GM12878 (cell line): ENCODE measurements at regions of chr10 and their contacts with region 1.

Region 1: GRCh38 chr10:77710759-77711682 is 73.4 kb upstream of the KCNMA1 start:
- DNase-seq: no peak
- ATAC-seq: peak; percentile 79
- H3K4me3 ChIP-seq: peak overlapping the region; percentile 65
- H3K27ac ChIP-seq: peak overlapping the region; percentile 21
- H3K4me1 ChIP-seq: peaks cover 21% of the 10 kb centered on the region
- H3K27me3 ChIP-seq: no peaks in the 10 kb centered on the region
- CTCF ChIP-seq: peak; percentile 97 to 99 (median 99)
- EP300 ChIP-seq: no peak
- POLR2A ChIP-seq: no peak
- RAD21 ChIP-seq: peak; percentile 91

Region 2: GRCh38 chr10:77251297-77252013 is 459.6 kb before region 1 on chr10:
- CTCF ChIA-PET with region 1: interaction called, 41 read pairs
- POLR2A ChIA-PET with region 1: interaction called, 4 read pairs
- RAD21 ChIA-PET with region 1: interaction called, 13 read pairs
- SMC1A ChIA-PET with region 1: interaction called, 12 read pairs
- in situ Hi-C with region 1: no loop called
- intact Hi-C with region 1: loop called (anchors 2 kb)
- DNase-seq: no peak
- ATAC-seq: peak; percentile 94
- H3K4me3 ChIP-seq: no peak overlapping the region
- H3K27ac ChIP-seq: no peak overlapping the region
- H3K4me1 ChIP-seq: no peaks in the 10 kb centered on the region
- H3K27me3 ChIP-seq: no peaks in the 10 kb centered on the region
- CTCF ChIP-seq: peak; percentile 59 to 76 (median 64)
- EP300 ChIP-seq: no peak
- POLR2A ChIP-seq: no peak
- RAD21 ChIP-seq: peak; percentile 66

Region 3: DNA sequence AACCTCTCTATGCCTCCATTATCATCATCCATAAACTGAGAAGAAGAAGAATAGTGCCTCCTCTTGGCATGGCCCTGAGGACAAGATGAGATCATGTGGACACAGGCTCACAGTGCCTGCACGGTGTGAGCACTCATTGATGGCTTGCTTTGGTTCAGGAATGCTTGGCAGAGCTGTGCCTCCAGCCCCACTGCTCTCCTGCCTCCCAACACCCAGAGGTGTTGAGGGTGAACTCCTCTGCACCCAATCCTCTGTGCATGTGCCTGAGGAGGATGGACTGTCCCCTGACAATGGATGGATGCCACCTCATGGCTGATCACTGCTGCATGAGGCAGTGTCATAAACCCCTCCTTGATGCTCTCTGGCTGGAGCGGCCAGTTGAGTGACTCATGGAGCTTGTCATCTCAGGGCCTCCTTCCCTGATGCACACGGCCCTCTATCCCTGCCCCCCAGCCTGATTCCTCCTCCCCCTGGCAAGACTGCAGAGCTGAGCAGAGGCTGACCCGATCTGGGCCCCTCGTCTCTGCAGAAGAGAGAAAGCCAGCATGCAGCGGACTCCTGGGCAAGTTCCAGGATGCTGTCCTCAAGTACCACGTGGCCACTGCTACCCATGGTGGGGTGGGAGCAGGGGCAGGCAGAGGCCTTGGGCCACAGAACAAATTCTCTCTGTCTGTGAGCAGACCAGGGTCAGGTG is 209.7 kb before region 1 on chr10:
- CTCF ChIA-PET with region 1: interaction called, 8 read pairs
- POLR2A ChIA-PET with region 1: no interaction called
- RAD21 ChIA-PET with region 1: interaction called, 19 read pairs
- SMC1A ChIA-PET with region 1: interaction called, 6 read pairs
- in situ Hi-C with region 1: no loop called
- intact Hi-C with region 1: loop called (anchors 2 kb)
- DNase-seq: no peak
- ATAC-seq: peak; percentile 32
- H3K4me3 ChIP-seq: no peak overlapping the region
- H3K27ac ChIP-seq: no peak overlapping the region
- H3K4me1 ChIP-seq: peaks cover 11% of the 10 kb centered on the region
- H3K27me3 ChIP-seq: no peaks in the 10 kb centered on the region
- CTCF ChIP-seq: no peak
- EP300 ChIP-seq: no peak
- POLR2A ChIP-seq: no peak
- RAD21 ChIP-seq: no peak

Region 4: DNA sequence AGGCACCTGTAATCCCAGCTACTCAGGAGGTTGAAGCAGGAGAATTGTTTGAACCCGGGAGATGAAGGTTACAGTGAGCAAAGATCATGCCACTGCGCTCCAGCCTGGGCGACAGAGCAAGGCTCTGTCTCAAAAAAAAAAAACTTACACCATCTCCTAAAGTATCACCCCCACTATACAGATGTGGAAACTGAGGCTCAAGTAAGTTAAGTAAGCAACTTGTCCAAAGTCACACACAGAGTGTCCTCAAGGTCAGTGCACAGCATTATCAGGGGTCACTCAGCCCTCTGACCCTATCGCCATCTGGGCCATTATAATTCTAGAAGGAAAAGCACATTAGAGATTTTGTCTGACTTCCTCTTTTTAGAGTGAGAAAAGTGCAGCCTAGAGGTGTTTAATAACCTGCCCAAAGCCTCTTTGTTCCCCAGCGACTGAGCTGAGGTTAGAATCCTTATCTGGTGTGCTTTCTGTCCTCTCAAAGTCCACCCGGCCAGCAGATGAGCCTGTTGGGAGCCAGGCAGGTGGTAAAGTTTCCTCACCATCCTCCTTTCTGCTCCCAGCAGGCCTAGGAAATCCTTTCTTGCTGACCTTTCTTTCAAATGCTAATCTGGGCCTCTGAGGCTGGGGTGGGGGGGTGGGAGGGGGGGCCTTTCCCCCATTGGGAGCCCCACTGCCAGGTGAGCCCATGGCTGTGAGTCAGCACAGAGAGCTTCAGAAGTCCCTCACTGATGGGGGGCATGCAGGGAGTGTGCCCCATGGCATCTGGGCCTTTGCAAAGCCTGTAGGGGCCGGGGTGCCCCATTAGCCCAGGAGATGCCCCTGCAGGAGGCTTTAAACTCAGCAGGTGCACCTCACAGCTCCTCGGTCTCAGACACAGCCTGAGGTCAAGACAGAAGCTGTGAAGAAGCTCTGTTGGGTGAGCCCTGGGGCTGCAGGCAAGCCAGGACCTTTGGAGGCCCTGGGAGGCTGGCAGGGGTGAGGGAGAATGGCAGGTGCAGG is 61.4 kb before region 1 on chr10:
- CTCF ChIA-PET with region 1: interaction called, 403 read pairs
- POLR2A ChIA-PET with region 1: interaction called, 5 read pairs
- RAD21 ChIA-PET with region 1: interaction called, 290 read pairs
- SMC1A ChIA-PET with region 1: interaction called, 291 read pairs
- in situ Hi-C with region 1: no loop called
- intact Hi-C with region 1: loop called (anchors 1 kb)
- DNase-seq: no peak
- ATAC-seq: peak; percentile 81
- H3K4me3 ChIP-seq: no peak overlapping the region
- H3K27ac ChIP-seq: peak overlapping the region; percentile 43; the same call in 1 of the 2 replicates
- H3K4me1 ChIP-seq: peaks cover 24% of the 10 kb centered on the region
- H3K27me3 ChIP-seq: no peaks in the 10 kb centered on the region
- CTCF ChIP-seq: no peak
- EP300 ChIP-seq: no peak
- POLR2A ChIP-seq: no peak
- RAD21 ChIP-seq: no peak

Region 5: GRCh38 chr10:77685432-77685831 is 25.6 kb before region 1 on chr10:
- CTCF ChIA-PET with region 1: interaction called, 18 read pairs
- POLR2A ChIA-PET with region 1: interaction called, 5 read pairs
- RAD21 ChIA-PET with region 1: interaction called, 13 read pairs
- SMC1A ChIA-PET with region 1: interaction called, 34 read pairs
- in situ Hi-C with region 1: no loop called
- intact Hi-C with region 1: no loop called
- DNase-seq: no peak
- ATAC-seq: peak; percentile 81
- H3K4me3 ChIP-seq: no peak overlapping the region
- H3K27ac ChIP-seq: no peak overlapping the region
- H3K4me1 ChIP-seq: peaks cover 47% of the 10 kb centered on the region
- H3K27me3 ChIP-seq: no peaks in the 10 kb centered on the region
- CTCF ChIP-seq: peak in 1 of 3 experiments; percentile 15; a peak in 1 of 6 replicates
- EP300 ChIP-seq: no peak
- POLR2A ChIP-seq: no peak
- RAD21 ChIP-seq: no peak

Region 6: GRCh38 chr10:77770081-77770867 is 59.3 kb after region 1 on chr10:
- CTCF ChIA-PET with region 1: interaction called, 10 read pairs
- POLR2A ChIA-PET with region 1: no interaction called
- RAD21 ChIA-PET with region 1: interaction called, 3 read pairs
- SMC1A ChIA-PET with region 1: interaction called, 6 read pairs
- in situ Hi-C with region 1: no loop called
- intact Hi-C with region 1: no loop called
- DNase-seq: no peak
- ATAC-seq: no peak
- H3K4me3 ChIP-seq: no peak overlapping the region
- H3K27ac ChIP-seq: no peak overlapping the region
- H3K4me1 ChIP-seq: no peaks in the 10 kb centered on the region
- H3K27me3 ChIP-seq: no peaks in the 10 kb centered on the region; a peak in 1 of 4 replicates
- CTCF ChIP-seq: no peak
- EP300 ChIP-seq: no peak
- POLR2A ChIP-seq: no peak
- RAD21 ChIP-seq: no peak